Right ventricle myocardium inferior (tissue), 1 donor: ENCODE measurements at regions of chr4 and their contacts with region 1.

Region 1: GRCh38 chr4:147924604-147925412 is 192.9 kb downstream of the ARHGAP10 start:
- DNase-seq: no peak
- ATAC-seq: no peak

Region 2: GRCh38 chr4:147813109-147813773 is 111.6 kb before region 1 on chr4:
- intact Hi-C with region 1: no loop called
- DNase-seq: no peak
- ATAC-seq: peak; percentile 40

Region 3: DNA sequence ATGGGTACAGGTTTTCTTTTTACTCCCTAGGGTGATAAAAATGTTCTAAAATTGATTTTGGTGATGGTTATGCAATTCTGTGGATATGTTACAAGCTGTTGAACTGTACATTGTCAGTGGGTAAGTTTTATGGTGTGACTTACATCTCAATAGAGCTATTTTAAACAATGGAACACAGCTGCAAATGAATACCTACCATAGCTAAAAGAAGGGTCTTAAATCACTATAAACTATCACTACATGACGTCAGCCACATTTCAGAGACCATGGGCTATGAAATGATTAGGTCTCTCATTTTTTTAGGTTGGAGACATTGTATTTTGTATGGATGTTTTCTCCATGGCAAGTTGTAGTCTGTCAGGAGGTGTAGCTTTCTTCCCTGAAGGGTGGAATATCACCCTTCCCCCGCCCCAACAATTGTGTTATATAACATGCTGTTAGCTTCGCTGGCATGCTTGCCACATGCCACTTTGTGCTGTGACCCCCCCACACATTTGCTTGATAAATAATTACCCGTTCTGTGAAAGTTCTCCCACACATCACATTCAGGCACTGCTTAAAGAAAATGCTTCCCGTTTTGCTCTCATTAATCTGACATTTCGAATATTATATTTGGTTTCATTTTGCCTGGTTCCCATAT is 33.2 kb before region 1 on chr4:
- intact Hi-C with region 1: no loop called
- DNase-seq: no peak
- ATAC-seq: no peak

Region 4: DNA sequence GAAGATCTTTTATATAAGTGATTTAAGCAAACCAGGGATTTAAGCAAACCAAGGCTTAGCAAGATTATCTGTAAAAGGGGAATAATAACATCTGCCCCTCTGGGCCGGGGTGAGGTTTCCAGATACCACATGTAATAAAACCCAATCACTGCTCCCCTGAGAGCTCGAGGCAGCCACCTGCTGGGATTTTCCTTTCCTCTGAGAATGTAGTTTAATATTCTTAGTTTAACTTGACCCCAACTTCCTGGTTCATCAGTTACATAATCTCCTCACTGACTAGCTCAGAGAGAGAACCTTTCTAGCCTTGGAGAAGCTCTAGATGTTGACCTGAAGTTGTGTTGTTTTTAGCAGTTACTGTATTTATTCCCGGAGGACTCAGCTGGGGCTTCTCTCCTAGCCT is 129.5 kb after region 1 on chr4:
- intact Hi-C with region 1: no loop called
- DNase-seq: no peak
- ATAC-seq: no peak

Region 5: GRCh38 chr4:148065075-148065474 is 140.3 kb after region 1 on chr4:
- intact Hi-C with region 1: loop called (anchors 5 kb)
- DNase-seq: no peak
- ATAC-seq: no peak